ENCODE measurements at regions of chr14 and their contacts with region 1.

Region 1: GRCh38 chr14:63276492-63277342 is 42.0 kb downstream of the GPHB5 start:
- DNase-seq: no peak
- H3K4me3 Mint-ChIP-seq: no peak overlapping the region
- H3K27ac Mint-ChIP-seq: no peak overlapping the region
- H3K4me1 Mint-ChIP-seq: no peaks in the 10 kb centered on the region
- H3K27me3 Mint-ChIP-seq: peaks cover 5% of the 10 kb centered on the region

Region 2: GRCh38 chr14:62179367-62180018 is 1097.2 kb before region 1 on chr14:
- CTCF ChIA-PET with region 1: interaction called, 15 read pairs
- DNase-seq: peak; percentile 40
- H3K4me3 Mint-ChIP-seq: no peak overlapping the region
- H3K27ac Mint-ChIP-seq: no peak overlapping the region
- H3K4me1 Mint-ChIP-seq: no peaks in the 10 kb centered on the region
- H3K27me3 Mint-ChIP-seq: peaks cover 14% of the 10 kb centered on the region

Region 3: GRCh38 chr14:63091394-63091996 is 185.2 kb before region 1 on chr14:
- CTCF ChIA-PET with region 1: no interaction called
- DNase-seq: no peak
- H3K4me3 Mint-ChIP-seq: no peak overlapping the region
- H3K27ac Mint-ChIP-seq: no peak overlapping the region
- H3K4me1 Mint-ChIP-seq: no peaks in the 10 kb centered on the region
- H3K27me3 Mint-ChIP-seq: no peaks in the 10 kb centered on the region

Measured in activated naive CD4-positive, alpha-beta T cell treated with anti-CD3 and anti-CD28 coated beads, Interleukin-2, amount 10 ng/mL, durations not matched to agents 7 days and 5 days (primary cell).